SK-N-SH (cell line): ENCODE measurements at regions of chr3 and their contacts with region 1.

Region 1: DNA sequence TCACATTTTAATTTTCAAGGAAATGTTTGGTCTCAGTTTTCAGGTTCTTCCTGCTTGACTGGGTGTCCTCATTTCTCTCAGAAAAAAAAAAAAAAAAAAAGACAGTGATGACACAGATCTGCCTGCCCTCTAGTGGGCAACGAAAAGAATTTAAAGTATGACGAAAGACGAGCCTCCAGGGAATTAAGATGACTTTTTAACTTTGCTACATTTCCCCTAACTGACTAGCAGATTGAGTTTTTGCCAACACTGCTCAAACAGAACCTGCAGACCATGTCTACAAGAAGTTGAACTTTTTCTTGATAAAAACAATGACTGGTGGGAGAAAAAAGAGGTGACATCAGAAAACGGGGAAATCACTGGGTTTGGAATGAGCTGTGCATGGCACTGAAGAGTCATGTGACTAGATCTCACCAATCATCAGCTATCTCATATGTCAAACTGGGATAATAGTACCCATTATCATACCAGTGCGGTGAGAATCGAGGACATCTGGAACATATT is 40.8 kb downstream of the EOMES start:
- DNase-seq: peak; percentile 64
- H3K4me3 ChIP-seq: peak overlapping the region; percentile 31 to 36; a peak in 2 of 4 replicates
- H3K27ac ChIP-seq: peak overlapping the region in 1 of 2 experiments; percentile 39; a peak in 2 of 4 replicates
- H3K4me1 ChIP-seq: peaks cover 2 to 3% of the 10 kb centered on the region in 2 experiments; a peak in 1 of 4 replicates
- H3K27me3 ChIP-seq: no peaks in the 10 kb centered on the region
- CTCF ChIP-seq: peak; percentile 85
- EP300 ChIP-seq: no peak; a peak in 1 of 4 replicates
- RAD21 ChIP-seq: peak; percentile 80

Region 2: DNA sequence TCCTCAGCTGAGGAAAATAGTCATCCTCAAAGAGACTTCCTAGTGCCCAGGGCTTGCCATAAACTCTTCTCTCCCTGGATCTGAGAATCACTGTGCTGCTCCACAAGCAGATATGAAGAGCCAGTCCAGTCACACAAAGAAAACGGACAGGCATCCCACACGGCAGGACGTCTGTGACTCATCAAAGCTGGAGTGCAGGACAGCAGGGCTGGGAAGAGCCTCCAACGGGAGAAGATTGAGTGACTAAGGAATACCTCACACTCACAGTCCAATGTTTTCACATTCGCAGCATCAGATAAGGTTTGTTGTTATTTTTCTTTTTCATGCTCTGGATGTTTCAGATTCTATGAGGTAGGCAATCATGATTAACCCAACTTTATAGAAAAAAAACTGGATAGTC is 369.9 kb before region 1 on chr3:
- CTCF ChIA-PET with region 1: interaction called, 15 read pairs
- POLR2A ChIA-PET with region 1: no interaction called
- DNase-seq: peak; percentile 4
- H3K4me3 ChIP-seq: no peak overlapping the region
- H3K27ac ChIP-seq: peak overlapping the region; percentile 5 to 90; a peak in 3 of 4 replicates
- H3K4me1 ChIP-seq: peaks cover 0 to 5% of the 10 kb centered on the region in 2 experiments; a peak in 1 of 4 replicates
- H3K27me3 ChIP-seq: no peaks in the 10 kb centered on the region
- CTCF ChIP-seq: no peak
- EP300 ChIP-seq: peak in 1 of 2 experiments; percentile 85; a peak in 1 of 4 replicates
- RAD21 ChIP-seq: no peak

Region 3: GRCh38 chr3:27357665-27358258 is 323.5 kb before region 1 on chr3:
- CTCF ChIA-PET with region 1: interaction called, 13 read pairs
- POLR2A ChIA-PET with region 1: no interaction called
- DNase-seq: peak; percentile 39
- H3K4me3 ChIP-seq: no peak overlapping the region; a peak in 1 of 4 replicates
- H3K27ac ChIP-seq: no peak overlapping the region
- H3K4me1 ChIP-seq: no peaks in the 10 kb centered on the region; a peak in 1 of 4 replicates
- H3K27me3 ChIP-seq: no peaks in the 10 kb centered on the region
- CTCF ChIP-seq: peak; percentile 70
- EP300 ChIP-seq: no peak
- RAD21 ChIP-seq: peak; percentile 74

Region 4: DNA sequence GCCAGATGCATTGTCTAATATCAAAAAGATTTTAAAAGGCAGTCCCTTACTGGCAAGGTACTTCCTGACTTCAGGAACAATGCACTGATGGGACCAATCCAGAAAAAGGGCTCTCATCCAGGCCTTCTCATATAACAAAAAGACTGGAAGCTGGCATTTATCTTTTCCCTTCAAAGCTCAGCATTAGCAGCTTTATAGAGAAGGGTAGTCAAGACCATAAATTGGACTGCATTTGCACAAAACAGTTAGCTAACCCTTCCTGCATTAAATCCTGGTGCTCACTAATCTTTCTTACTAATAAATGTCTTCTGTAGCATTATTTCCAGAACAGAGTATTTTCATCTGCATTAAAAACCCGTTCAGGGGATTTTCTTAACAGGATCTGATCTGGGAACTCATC is 266.1 kb before region 1 on chr3:
- CTCF ChIA-PET with region 1: no interaction called
- POLR2A ChIA-PET with region 1: no interaction called
- DNase-seq: no peak
- H3K4me3 ChIP-seq: no peak overlapping the region
- H3K27ac ChIP-seq: no peak overlapping the region
- H3K4me1 ChIP-seq: no peaks in the 10 kb centered on the region
- H3K27me3 ChIP-seq: no peaks in the 10 kb centered on the region
- CTCF ChIP-seq: no peak
- EP300 ChIP-seq: no peak
- RAD21 ChIP-seq: no peak

Region 5: GRCh38 chr3:27659279-27660021 is 21.8 kb before region 1 on chr3:
- CTCF ChIA-PET with region 1: interaction called, 19 read pairs
- POLR2A ChIA-PET with region 1: no interaction called
- DNase-seq: peak; percentile 66
- H3K4me3 ChIP-seq: no peak overlapping the region
- H3K27ac ChIP-seq: no peak overlapping the region
- H3K4me1 ChIP-seq: no peaks in the 10 kb centered on the region; a peak in 1 of 4 replicates
- H3K27me3 ChIP-seq: no peaks in the 10 kb centered on the region
- CTCF ChIP-seq: peak; percentile 78
- EP300 ChIP-seq: no peak
- RAD21 ChIP-seq: peak; percentile 71

Region 6: GRCh38 chr3:27666708-27667107 is 14.6 kb before region 1 on chr3:
- CTCF ChIA-PET with region 1: interaction called, 15 read pairs
- POLR2A ChIA-PET with region 1: no interaction called
- DNase-seq: peak; percentile 72
- H3K4me3 ChIP-seq: no peak overlapping the region
- H3K27ac ChIP-seq: no peak overlapping the region
- H3K4me1 ChIP-seq: peaks cover 0 to 5% of the 10 kb centered on the region in 2 experiments; a peak in 1 of 4 replicates
- H3K27me3 ChIP-seq: no peaks in the 10 kb centered on the region
- CTCF ChIP-seq: no peak; the same call in 1 of the 2 replicates
- EP300 ChIP-seq: no peak
- RAD21 ChIP-seq: peak; percentile 29; the same call in 1 of the 2 replicates

Region 7: DNA sequence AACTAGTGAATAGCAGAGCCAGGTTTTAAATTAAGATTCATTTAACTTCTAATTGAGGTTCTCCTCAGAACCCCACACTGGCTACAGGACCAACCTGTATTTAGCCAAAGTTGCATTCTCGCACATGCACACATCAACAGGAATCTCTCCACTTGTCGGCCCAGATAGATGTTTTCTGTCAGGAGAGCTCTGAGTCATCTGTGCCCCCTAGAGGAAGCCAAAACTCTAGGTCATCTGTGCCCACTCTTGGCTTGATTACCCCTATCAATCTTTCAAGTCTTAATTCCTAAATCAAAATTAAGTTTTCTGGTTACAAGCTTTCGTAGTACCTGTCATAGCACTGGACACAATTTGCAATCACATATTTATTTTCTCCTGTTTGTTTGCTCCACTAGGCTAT is 145.7 kb after region 1 on chr3:
- CTCF ChIA-PET with region 1: no interaction called
- POLR2A ChIA-PET with region 1: no interaction called
- DNase-seq: peak; percentile 2
- H3K4me3 ChIP-seq: no peak overlapping the region
- H3K27ac ChIP-seq: no peak overlapping the region
- H3K4me1 ChIP-seq: no peaks in the 10 kb centered on the region
- H3K27me3 ChIP-seq: no peaks in the 10 kb centered on the region; the same call in 1 of the 2 replicates
- CTCF ChIP-seq: no peak
- EP300 ChIP-seq: no peak
- RAD21 ChIP-seq: no peak